ENCODE measurements at regions of chr3 and their contacts with region 1.

Region 1: DNA sequence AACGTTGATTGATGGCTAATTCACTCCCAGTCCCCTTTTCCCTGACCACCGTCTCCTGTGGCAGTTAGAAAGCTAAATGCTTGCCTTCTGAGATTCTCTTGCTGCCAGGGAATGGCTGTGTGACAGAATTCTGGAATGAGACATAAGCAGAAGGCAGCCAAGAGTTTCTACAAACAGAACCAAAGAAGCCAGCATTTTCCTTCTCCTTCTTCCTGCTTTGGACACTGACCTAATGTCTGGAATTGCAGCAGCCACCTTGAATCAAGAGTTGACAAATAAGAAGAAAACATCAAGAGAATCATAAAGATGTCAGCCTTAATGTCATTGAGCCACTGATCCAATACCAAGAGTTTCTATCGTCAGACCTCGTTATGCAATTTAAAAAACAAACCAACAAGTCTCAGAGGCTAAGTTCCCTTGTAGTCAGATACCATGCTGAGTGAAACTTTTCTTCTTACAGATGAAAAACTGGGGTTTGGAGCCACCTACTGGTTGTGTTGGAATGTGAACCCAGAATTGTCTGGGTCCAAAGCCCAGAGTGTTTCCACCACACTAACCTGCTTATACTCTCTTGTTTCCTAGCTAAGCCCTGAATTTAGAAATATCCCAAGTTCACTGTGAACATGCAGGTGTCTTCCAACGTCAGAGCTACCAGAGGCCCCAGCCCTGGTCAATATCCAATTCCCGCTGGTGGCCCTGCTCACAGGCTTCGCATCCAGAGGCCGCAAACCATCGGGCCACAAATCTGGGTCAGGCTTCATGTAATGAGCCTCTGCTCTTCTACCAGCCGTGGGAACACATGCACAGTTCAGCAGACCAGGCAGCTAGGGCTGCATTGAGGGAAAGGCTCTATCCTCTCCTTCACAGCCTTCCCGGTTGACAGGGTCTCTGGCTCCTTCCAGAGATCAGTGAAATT is 42.5 kb downstream of the MCF2L2 start:
- DNase-seq: peak; percentile 71

Region 2: GRCh38 chr3:182713743-182714517 is 672.0 kb before region 1 on chr3:
- in situ Hi-C with region 1: loop called (anchors 25 kb)
- DNase-seq: peak; percentile 49

Region 3: GRCh38 chr3:182818296-182818978 is 567.5 kb before region 1 on chr3:
- in situ Hi-C with region 1: no loop called
- DNase-seq: no peak

Region 4: GRCh38 chr3:183178629-183179549 is 207.1 kb before region 1 on chr3:
- in situ Hi-C with region 1: loop called (anchors 25 kb)
- DNase-seq: peak; percentile 47

Region 5: GRCh38 chr3:183328823-183329222 is 57.1 kb before region 1 on chr3:
- in situ Hi-C with region 1: no loop called
- DNase-seq: no peak

Region 6: GRCh38 chr3:183779896-183780465 is 394.0 kb after region 1 on chr3:
- in situ Hi-C with region 1: no loop called
- DNase-seq: peak; percentile 71

Region 7: GRCh38 chr3:183959214-183959613 is 573.3 kb after region 1 on chr3:
- in situ Hi-C with region 1: no loop called
- DNase-seq: no peak